PC-9 (cell line): ENCODE measurements at regions of chr14 and their contacts with region 1.

Region 1: GRCh38 chr14:71320107-71320733 is 413.0 kb downstream of the PCNX1 start:
- DNase-seq: peak; percentile 94 to 97
- H3K4me3 ChIP-seq: peak within 1 kb of the TSS; percentile 97
- H3K27ac ChIP-seq: peak within 1 kb of the TSS; percentile 99
- H3K4me1 ChIP-seq: peaks cover 40% of the 10 kb centered on the region
- H3K27me3 ChIP-seq: no peaks in the 10 kb centered on the region
- CTCF ChIP-seq: no peak

Region 2: DNA sequence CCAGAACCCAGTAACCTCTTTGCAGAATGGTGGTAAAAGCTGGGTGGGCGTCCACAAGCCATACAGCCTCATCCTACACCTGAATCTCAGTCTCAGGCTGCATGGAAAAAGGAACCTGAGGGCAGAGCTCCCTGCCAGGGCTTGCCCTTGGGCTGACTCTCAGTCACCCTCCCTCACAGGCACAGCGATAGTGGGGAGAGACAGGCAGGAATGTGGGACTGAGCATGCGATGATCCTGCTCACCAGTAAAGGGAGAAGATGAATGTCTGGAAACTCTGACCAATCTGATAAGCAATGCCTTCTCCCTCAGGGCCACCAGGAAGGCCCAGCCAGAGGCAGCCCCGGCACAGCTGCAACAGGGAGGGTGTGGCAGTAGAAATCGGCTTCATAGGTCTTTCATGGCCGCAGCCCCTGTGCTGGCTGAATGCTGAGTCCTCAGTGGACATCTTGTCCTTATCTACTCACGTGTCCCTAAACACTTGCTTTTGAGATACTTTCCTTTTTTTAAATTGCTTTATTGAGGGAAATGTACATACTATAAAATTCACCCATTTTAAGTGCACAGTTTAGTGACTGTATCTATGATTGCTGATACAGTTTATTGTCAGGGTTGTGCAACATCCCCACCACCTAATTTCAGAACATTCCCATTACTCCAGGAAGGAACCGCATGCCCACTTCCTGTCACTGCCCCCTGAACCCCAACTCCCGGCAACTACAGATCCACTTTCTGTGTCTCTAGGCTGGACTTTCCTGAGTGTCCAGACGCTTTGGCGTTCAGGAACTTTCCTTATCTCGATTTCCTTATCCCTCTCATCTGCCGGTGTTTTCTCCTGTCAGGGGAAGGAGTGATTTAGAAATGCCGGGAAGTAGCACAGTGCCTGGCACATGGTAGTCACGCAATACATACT is 154.8 kb before region 1 on chr14:
- CTCF ChIA-PET with region 1: no interaction called
- POLR2A ChIA-PET with region 1: no interaction called
- intact Hi-C with region 1: loop called (anchors 1 kb)
- DNase-seq: peak; percentile 65 to 67
- H3K4me3 ChIP-seq: no peak overlapping the region
- H3K27ac ChIP-seq: no peak overlapping the region
- H3K4me1 ChIP-seq: peaks cover 11% of the 10 kb centered on the region
- H3K27me3 ChIP-seq: no peaks in the 10 kb centered on the region
- CTCF ChIP-seq: no peak

Region 3: DNA sequence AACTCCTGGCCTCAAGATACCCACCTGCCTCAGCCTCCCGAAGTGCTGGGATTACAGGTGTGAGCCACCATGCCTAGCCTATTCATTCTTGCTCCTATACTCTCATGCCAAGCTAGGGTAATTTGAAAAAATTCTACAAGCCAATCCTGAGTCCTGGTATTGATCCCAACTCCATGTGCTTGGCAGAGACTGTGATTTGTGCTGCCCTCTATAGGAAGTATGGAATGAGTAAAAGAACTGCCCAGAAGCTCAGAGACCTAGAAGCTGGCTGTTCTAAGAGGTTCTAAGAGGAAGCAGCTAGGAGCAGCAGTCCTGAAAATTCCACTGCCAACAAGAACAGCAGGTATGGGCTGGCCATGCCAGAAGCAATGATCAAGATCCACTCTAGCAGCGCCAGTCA is 10.5 kb before region 1 on chr14:
- CTCF ChIA-PET with region 1: no interaction called
- POLR2A ChIA-PET with region 1: no interaction called
- intact Hi-C with region 1: no loop called
- DNase-seq: no peak
- H3K4me3 ChIP-seq: no peak overlapping the region
- H3K27ac ChIP-seq: no peak overlapping the region
- H3K4me1 ChIP-seq: no peaks in the 10 kb centered on the region
- H3K27me3 ChIP-seq: no peaks in the 10 kb centered on the region
- CTCF ChIP-seq: peak; percentile 26; the same call in 1 of the 2 replicates

Region 4: GRCh38 chr14:71339650-71340415 is 19.6 kb after region 1 on chr14:
- CTCF ChIA-PET with region 1: no interaction called
- POLR2A ChIA-PET with region 1: no interaction called
- intact Hi-C with region 1: no loop called
- DNase-seq: no peak
- H3K4me3 ChIP-seq: no peak overlapping the region
- H3K27ac ChIP-seq: peak overlapping the region; percentile 18; the same call in 1 of the 2 replicates
- H3K4me1 ChIP-seq: no peaks in the 10 kb centered on the region
- H3K27me3 ChIP-seq: no peaks in the 10 kb centered on the region
- CTCF ChIP-seq: no peak

Region 5: GRCh38 chr14:71361336-71361735 is 41.1 kb after region 1 on chr14:
- CTCF ChIA-PET with region 1: no interaction called
- POLR2A ChIA-PET with region 1: no interaction called
- intact Hi-C with region 1: loop called (anchors 1 kb)
- DNase-seq: peak; percentile 4 to 51
- H3K4me3 ChIP-seq: no peak overlapping the region
- H3K27ac ChIP-seq: no peak overlapping the region
- H3K4me1 ChIP-seq: peaks cover 14% of the 10 kb centered on the region; the same call in 1 of the 2 replicates
- H3K27me3 ChIP-seq: no peaks in the 10 kb centered on the region
- CTCF ChIP-seq: no peak

Region 6: GRCh38 chr14:71403656-71404055 is 83.4 kb after region 1 on chr14:
- CTCF ChIA-PET with region 1: interaction called, 3 read pairs
- POLR2A ChIA-PET with region 1: no interaction called
- intact Hi-C with region 1: loop called (anchors 5 kb)
- DNase-seq: no peak
- H3K4me3 ChIP-seq: no peak overlapping the region
- H3K27ac ChIP-seq: no peak overlapping the region
- H3K4me1 ChIP-seq: peaks cover 16% of the 10 kb centered on the region; the same call in 1 of the 2 replicates
- H3K27me3 ChIP-seq: no peaks in the 10 kb centered on the region
- CTCF ChIP-seq: no peak

Region 7: DNA sequence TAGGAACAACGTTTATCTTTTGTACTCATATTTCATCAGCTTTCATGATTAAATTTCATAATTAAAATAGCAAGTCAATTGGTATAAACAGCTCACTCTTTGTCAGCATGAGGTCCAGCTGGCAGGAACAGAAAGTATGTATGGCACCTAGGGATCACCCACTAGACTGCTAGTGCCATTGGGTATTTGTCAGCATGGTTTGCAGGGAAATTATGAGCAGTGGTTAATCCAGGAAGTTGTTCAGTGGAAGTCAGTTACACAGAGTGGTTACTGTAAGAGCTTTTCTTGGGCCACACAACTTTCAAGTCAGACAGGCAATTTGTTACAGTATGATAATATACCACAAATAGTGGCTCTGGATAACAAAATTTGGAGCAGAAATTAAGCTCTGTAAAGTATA is 271.7 kb after region 1 on chr14:
- CTCF ChIA-PET with region 1: no interaction called
- POLR2A ChIA-PET with region 1: no interaction called
- intact Hi-C with region 1: loop called (anchors 10 kb)
- DNase-seq: no peak
- H3K4me3 ChIP-seq: no peak overlapping the region
- H3K27ac ChIP-seq: peak overlapping the region; percentile 29; the same call in 1 of the 2 replicates
- H3K4me1 ChIP-seq: peaks cover 10% of the 10 kb centered on the region; the same call in 1 of the 2 replicates
- H3K27me3 ChIP-seq: no peaks in the 10 kb centered on the region
- CTCF ChIP-seq: no peak

Region 8: DNA sequence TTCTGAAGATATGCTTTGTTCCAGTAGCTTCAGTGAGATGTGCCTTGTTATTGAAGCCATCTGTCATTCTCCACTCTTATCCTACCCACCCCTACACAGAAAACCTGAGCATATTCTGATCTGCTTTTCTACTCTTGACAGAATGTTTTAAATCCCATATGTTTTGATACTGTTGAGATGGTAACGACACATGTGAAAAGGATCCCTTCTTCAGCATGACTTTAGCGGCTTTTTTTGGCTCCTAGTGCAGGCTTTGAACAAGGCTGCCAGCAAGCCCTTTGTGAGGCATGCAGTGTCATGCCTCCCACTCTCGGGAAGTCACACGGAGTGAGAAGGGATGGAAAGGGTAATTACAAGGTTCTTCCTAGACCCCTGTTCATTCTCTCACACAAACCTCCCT is 383.3 kb after region 1 on chr14:
- CTCF ChIA-PET with region 1: no interaction called
- POLR2A ChIA-PET with region 1: interaction called, 12 read pairs
- intact Hi-C with region 1: no loop called
- DNase-seq: no peak
- H3K4me3 ChIP-seq: no peak overlapping the region
- H3K27ac ChIP-seq: no peak overlapping the region
- H3K4me1 ChIP-seq: peaks cover 8% of the 10 kb centered on the region
- H3K27me3 ChIP-seq: no peaks in the 10 kb centered on the region
- CTCF ChIP-seq: no peak

Region 9: DNA sequence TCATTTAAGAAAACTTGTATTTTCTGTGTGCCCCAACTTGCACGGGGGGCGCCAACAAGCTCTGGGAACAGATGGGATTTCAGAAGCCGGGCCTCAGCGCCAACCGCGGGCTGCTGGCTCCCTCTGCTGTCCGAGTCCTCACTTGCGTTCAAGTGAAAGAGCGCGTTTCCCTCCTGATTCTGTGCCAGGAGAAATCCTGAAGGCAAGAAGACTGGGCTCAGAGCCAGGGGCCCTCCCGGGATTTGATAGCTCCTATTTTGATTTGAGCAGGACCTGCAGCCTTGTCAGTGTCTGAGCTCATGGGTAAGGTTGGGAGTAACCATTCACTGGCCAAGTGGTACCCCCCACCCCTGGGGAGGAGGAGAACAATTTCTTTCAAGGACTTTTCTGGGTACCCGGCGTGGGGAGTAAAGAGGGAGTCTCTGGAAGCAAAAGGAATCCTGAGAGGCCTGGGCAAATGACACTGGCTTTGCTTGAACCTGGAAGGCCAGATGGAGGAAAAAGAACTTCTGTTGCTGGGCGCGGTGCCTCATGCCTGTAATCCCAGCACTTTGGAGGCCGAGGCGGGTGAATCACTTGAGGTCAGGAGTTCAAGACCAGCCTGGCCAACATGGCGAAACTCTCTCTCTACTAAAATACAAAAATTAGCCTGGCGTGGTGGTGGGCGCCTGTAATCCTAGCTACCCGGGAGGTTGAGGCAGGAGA is 433.1 kb after region 1 on chr14:
- CTCF ChIA-PET with region 1: no interaction called
- POLR2A ChIA-PET with region 1: no interaction called
- intact Hi-C with region 1: loop called (anchors 2 kb)
- DNase-seq: peak; percentile 63 to 78
- H3K4me3 ChIP-seq: peak overlapping the region; percentile 29; the same call in 1 of the 2 replicates
- H3K27ac ChIP-seq: no peak overlapping the region
- H3K4me1 ChIP-seq: 0 out of 2 replicates have a peak, but pooled peaks cover 5% of the 10 kb centered on the region
- H3K27me3 ChIP-seq: no peaks in the 10 kb centered on the region
- CTCF ChIP-seq: peak; percentile 93